ENCODE measurements at regions of chr11 and their contacts with region 1.

Region 1: DNA sequence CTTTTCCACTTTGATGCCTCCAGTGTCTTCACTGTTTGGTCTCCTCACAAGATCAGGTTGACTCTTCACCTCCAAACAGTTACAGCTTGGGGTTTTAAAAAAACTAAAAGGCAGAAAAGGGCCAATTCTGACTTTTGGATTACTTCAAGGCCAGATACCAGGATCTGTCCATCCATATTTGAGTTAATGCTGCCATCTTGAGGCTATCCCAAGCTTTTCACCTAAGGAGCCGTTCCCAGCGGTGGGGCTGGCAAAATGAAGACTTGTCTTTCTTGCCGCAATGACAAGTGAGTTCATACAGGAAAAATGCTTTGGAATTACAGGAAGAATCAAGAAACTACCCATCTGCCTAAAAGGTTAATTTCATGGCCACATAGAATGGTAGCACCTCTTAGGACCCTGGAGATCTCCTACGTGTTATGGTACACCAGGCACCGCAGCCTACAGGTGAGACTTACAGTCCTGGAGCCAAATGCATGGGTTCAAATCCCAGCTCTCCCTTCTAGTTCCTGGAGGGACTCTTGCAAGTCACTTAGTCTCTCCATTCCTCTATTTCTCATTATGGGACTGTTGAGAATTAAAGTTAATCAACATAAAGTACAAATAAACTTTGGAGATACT is 6.0 kb upstream of the OR5B21 start:
- DNase-seq: peak; percentile 47
- ATAC-seq: peak; percentile 96
- H3K4me3 ChIP-seq: no peak overlapping the region
- H3K27ac ChIP-seq: no peak overlapping the region
- H3K4me1 ChIP-seq: no peaks in the 10 kb centered on the region
- H3K27me3 ChIP-seq: peaks cover 2% of the 10 kb centered on the region
- CTCF ChIP-seq: peak; percentile 73

Region 2: GRCh38 chr11:57456960-57457642 is 1056.8 kb before region 1 on chr11:
- CTCF ChIA-PET with region 1: no interaction called
- POLR2A ChIA-PET with region 1: no interaction called
- in situ Hi-C with region 1: no loop called
- intact Hi-C with region 1: loop called (anchors 5 kb)
- DNase-seq: peak; percentile 64
- ATAC-seq: peak; percentile 85
- H3K4me3 ChIP-seq: peak overlapping the region in 1 of 2 experiments; percentile 32; a peak in 1 of 4 replicates
- H3K27ac ChIP-seq: no peak overlapping the region
- H3K4me1 ChIP-seq: peaks cover 4% of the 10 kb centered on the region; the same call in 1 of the 2 replicates
- H3K27me3 ChIP-seq: peaks cover 6% of the 10 kb centered on the region; the same call in 1 of the 2 replicates
- CTCF ChIP-seq: peak; percentile 98

Region 3: DNA sequence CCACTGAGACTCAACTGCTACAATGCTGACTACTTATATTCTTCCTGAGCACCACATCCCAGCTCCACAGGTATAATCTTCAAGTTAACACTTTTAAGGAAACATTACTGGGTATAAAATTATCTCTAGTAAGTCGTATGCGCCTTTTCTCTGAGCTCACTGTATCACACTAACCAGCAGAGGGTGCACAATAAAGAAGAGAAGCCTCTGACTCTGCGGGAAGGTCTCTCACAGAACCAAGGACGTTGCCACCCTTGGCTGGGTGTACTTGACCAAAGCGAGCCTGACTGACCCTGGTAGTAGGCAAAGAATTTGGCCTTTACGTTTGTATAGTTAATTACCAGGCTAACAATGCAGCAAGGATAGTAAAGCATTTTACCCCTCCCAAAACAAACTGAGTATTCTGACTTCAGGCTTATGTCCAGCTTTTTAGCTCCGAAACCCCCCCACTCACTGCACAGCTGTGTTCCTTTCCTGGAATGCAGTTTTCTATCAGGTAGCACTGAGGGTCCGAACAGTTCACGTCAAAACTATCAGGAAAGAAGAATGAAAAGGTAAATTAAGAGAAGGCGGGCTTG is 762.1 kb before region 1 on chr11 and contains the start of gene BTBD18:
- CTCF ChIA-PET with region 1: no interaction called
- POLR2A ChIA-PET with region 1: no interaction called
- in situ Hi-C with region 1: no loop called
- intact Hi-C with region 1: loop called (anchors 5 kb)
- DNase-seq: no peak
- ATAC-seq: peak; percentile 91
- H3K4me3 ChIP-seq: no peak within 1 kb of the TSS
- H3K27ac ChIP-seq: peak within 1 kb of the TSS; percentile 12; the same call in 1 of the 2 replicates
- H3K4me1 ChIP-seq: no peaks in the 10 kb centered on the region; the same call in 1 of the 2 replicates
- H3K27me3 ChIP-seq: no peaks in the 10 kb centered on the region
- CTCF ChIP-seq: peak; percentile 81
- total RNA-seq, gene BTBD18: not detected

Region 4: GRCh38 chr11:58068655-58069054 is 445.2 kb before region 1 on chr11:
- CTCF ChIA-PET with region 1: no interaction called
- POLR2A ChIA-PET with region 1: no interaction called
- in situ Hi-C with region 1: no loop called
- intact Hi-C with region 1: loop called (anchors 5 kb)
- DNase-seq: no peak
- ATAC-seq: no peak
- H3K4me3 ChIP-seq: no peak overlapping the region
- H3K27ac ChIP-seq: no peak overlapping the region
- H3K4me1 ChIP-seq: no peaks in the 10 kb centered on the region
- H3K27me3 ChIP-seq: no peaks in the 10 kb centered on the region
- CTCF ChIP-seq: 0 out of 2 replicates have a peak, but pooled peaks have one; percentile 13

Region 5: DNA sequence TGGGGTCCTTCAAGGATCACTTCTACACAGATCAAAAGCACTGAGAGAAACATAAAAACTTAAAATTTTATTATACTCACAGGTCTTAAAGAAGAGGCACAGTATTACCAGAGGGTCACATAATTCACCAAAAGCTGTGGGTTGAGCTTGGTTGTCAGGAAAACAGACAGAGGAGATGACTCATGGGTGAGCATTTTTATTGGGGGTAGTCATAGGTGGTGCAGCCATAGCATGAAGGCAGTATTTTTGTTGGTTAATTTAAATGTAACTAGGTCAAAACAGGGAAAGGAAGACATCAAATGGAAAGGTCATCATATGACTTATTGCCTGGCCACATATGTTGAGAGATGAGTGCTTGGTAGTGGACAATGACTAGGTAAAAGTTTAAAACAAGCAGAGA is 179.1 kb before region 1 on chr11:
- CTCF ChIA-PET with region 1: no interaction called
- POLR2A ChIA-PET with region 1: no interaction called
- in situ Hi-C with region 1: no loop called
- intact Hi-C with region 1: no loop called
- DNase-seq: no peak
- ATAC-seq: no peak
- H3K4me3 ChIP-seq: no peak overlapping the region
- H3K27ac ChIP-seq: no peak overlapping the region
- H3K4me1 ChIP-seq: no peaks in the 10 kb centered on the region
- H3K27me3 ChIP-seq: no peaks in the 10 kb centered on the region
- CTCF ChIP-seq: no peak